ENCODE measurements at regions of chr10 and their contacts with region 1.

Region 1: DNA sequence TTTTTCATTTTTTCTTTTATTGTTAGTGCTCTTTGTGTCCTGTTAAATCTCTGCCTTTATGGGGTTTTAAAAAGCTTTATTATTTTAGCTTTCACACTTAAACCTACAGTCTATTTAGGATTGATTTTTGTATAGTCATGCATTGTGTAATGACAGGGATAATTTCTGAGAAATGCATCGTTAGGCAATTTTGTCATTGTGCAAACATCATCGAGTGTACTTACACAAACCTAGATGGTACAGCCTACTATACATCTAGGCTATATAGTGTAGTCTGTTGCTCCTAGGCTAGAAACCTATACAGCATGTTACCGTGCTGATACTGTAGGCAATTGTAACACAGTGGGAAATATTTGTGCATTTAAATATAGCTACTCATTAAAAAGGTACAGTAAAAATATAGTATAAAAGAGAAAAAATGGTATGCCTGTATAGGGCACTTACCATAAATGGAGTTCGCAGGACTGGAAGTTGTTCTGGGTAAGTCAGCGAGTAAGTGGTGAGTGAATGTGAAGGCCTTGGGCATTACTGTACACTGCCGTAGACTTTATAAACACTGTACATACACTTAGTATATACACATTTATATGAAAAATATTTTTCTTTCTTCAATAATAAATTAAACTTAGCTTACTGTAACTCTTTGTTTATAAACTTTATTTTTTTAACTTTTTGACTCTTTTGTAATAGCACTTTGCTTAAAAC is 16.0 kb downstream of the UBE2D1 start:
- DNase-seq: no peak
- H3K4me3 ChIP-seq: no peak overlapping the region
- H3K27ac ChIP-seq: no peak overlapping the region
- H3K27me3 ChIP-seq: no peaks in the 10 kb centered on the region
- CTCF ChIP-seq: no peak

Region 2: GRCh38 chr10:58334817-58335305 is 15.9 kb before region 1 on chr10 and contains the start of gene UBE2D1:
- CTCF ChIA-PET with region 1: no interaction called
- POLR2A ChIA-PET with region 1: interaction called, 11 read pairs
- DNase-seq: no peak
- H3K4me3 ChIP-seq: peak within 1 kb of the TSS; percentile 77
- H3K27ac ChIP-seq: no peak within 1 kb of the TSS
- H3K27me3 ChIP-seq: peaks cover 1% of the 10 kb centered on the region
- CTCF ChIP-seq: no peak; the same call in 1 of the 2 replicates
- polyA plus RNA-seq, gene UBE2D1: 24.3 and 36.1 TPM in 2 replicates

Region 3: GRCh38 chr10:58435297-58435985 is 84.7 kb after region 1 on chr10:
- CTCF ChIA-PET with region 1: no interaction called
- POLR2A ChIA-PET with region 1: no interaction called
- DNase-seq: peak; percentile 87
- H3K4me3 ChIP-seq: no peak overlapping the region
- H3K27ac ChIP-seq: peak overlapping the region; percentile 87
- H3K27me3 ChIP-seq: no peaks in the 10 kb centered on the region
- CTCF ChIP-seq: no peak

Measured in AG04450 (cell line).